B cell (primary cell): ENCODE measurements at regions of chr3 and their contacts with region 1.

Region 1: GRCh38 chr3:157081681-157082210 is 78.2 kb downstream of the CCNL1 start:
- DNase-seq: peak; percentile 86
- ATAC-seq: peak; percentile 99
- H3K4me3 ChIP-seq: no peak overlapping the region
- H3K4me3 Mint-ChIP-seq: peak overlapping the region; percentile 2
- H3K27ac ChIP-seq: no peak overlapping the region
- H3K27ac Mint-ChIP-seq: peak overlapping the region; percentile 63
- H3K4me1 ChIP-seq: peaks cover 9 to 11% of the 10 kb centered on the region in 2 donors
- H3K4me1 Mint-ChIP-seq: peaks cover 11% of the 10 kb centered on the region
- H3K27me3 ChIP-seq: peaks cover 0 to 4% (median 0%) of the 10 kb centered on the region in 4 experiments
- H3K27me3 Mint-ChIP-seq: peaks cover 8% of the 10 kb centered on the region
- CTCF ChIP-seq: peak; percentile 96

Region 2: GRCh38 chr3:155835341-155836071 is 1246.2 kb before region 1 on chr3:
- CTCF ChIA-PET with region 1: no interaction called
- POLR2A ChIA-PET with region 1: no interaction called
- intact Hi-C with region 1: no loop called
- DNase-seq: no peak
- ATAC-seq: no peak
- H3K4me3 ChIP-seq: no peak overlapping the region
- H3K4me3 Mint-ChIP-seq: no peak overlapping the region
- H3K27ac ChIP-seq: no peak overlapping the region
- H3K27ac Mint-ChIP-seq: no peak overlapping the region
- H3K4me1 ChIP-seq: no peaks in the 10 kb centered on the region
- H3K4me1 Mint-ChIP-seq: no peaks in the 10 kb centered on the region
- H3K27me3 ChIP-seq: no peaks in the 10 kb centered on the region
- H3K27me3 Mint-ChIP-seq: no peaks in the 10 kb centered on the region
- CTCF ChIP-seq: no peak

Region 3: DNA sequence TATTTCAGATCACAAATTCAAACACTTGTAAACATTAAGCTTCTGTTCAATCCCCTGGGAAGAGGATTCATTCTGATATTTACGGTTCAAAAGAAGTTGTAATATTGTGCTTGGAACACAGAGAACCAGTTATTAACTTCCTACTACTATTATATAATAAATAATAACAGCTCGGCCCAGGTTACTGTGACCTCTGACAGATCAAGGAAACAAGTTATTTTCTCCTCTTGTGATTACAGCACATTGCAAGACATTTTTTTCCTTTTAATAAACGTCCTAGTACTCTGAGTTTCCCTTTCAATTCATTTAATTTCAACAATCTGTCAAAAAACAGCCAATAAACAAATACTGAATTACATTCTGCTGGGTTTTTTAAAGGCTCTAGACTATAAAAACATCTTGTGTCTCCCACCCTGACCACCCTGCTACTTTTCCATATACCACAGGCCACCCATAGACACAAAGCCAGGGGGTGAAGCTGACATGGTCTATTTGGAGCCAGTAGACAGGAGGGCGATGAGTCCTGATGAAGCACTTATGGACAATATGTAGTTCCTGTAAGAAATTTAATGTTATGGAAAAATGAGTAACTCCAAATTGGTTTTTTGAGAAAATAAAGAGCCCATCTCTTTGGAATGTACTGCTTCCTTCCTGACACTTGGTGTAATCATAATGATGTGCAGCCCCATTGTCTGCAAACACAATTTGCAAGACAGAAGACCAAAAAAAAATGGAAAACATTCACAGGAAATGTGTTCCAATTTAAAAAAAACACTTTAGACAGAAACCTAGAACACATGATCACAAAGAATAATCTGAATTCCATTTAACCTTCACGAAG is 538.8 kb before region 1 on chr3:
- CTCF ChIA-PET with region 1: interaction called, 17 read pairs
- POLR2A ChIA-PET with region 1: no interaction called
- intact Hi-C with region 1: no loop called
- DNase-seq: no peak
- ATAC-seq: no peak
- H3K4me3 ChIP-seq: no peak overlapping the region
- H3K4me3 Mint-ChIP-seq: no peak overlapping the region
- H3K27ac ChIP-seq: no peak overlapping the region
- H3K27ac Mint-ChIP-seq: no peak overlapping the region
- H3K4me1 ChIP-seq: no peaks in the 10 kb centered on the region
- H3K4me1 Mint-ChIP-seq: no peaks in the 10 kb centered on the region
- H3K27me3 ChIP-seq: no peaks in the 10 kb centered on the region
- H3K27me3 Mint-ChIP-seq: no peaks in the 10 kb centered on the region
- CTCF ChIP-seq: no peak

Region 4: GRCh38 chr3:156891665-156892064 is 190.1 kb before region 1 on chr3:
- CTCF ChIA-PET with region 1: interaction called, 4 read pairs
- POLR2A ChIA-PET with region 1: no interaction called
- intact Hi-C with region 1: loop called (anchors 2 kb)
- DNase-seq: peak; percentile 14
- ATAC-seq: no peak
- H3K4me3 ChIP-seq: no peak overlapping the region
- H3K4me3 Mint-ChIP-seq: no peak overlapping the region
- H3K27ac ChIP-seq: no peak overlapping the region
- H3K27ac Mint-ChIP-seq: no peak overlapping the region
- H3K4me1 ChIP-seq: no peaks in the 10 kb centered on the region
- H3K4me1 Mint-ChIP-seq: no peaks in the 10 kb centered on the region
- H3K27me3 ChIP-seq: no peaks in the 10 kb centered on the region
- H3K27me3 Mint-ChIP-seq: no peaks in the 10 kb centered on the region
- CTCF ChIP-seq: no peak

Region 5: DNA sequence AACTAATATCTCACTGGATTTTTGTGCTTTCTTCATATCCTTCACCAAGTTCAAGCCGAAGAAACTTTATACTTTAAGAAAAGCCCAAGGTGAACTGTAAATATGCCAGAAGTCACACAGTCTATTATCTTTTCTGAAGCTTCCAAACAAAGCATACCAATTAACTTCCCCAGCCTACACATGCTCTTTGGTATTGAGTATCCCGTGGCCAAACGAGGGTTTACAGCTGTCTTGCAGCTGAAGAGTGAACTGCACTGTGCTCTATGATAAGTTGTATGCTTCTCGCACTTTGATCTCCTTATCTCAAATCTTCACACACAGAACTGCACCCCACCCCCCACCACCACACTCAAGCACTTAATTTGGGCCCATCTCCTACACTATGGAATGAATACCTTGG is 637.1 kb after region 1 on chr3:
- CTCF ChIA-PET with region 1: no interaction called
- POLR2A ChIA-PET with region 1: no interaction called
- intact Hi-C with region 1: no loop called
- DNase-seq: no peak
- ATAC-seq: no peak
- H3K4me3 ChIP-seq: no peak overlapping the region
- H3K4me3 Mint-ChIP-seq: no peak overlapping the region
- H3K27ac ChIP-seq: no peak overlapping the region
- H3K27ac Mint-ChIP-seq: no peak overlapping the region
- H3K4me1 ChIP-seq: no peaks in the 10 kb centered on the region
- H3K4me1 Mint-ChIP-seq: no peaks in the 10 kb centered on the region
- H3K27me3 ChIP-seq: no peaks in the 10 kb centered on the region
- H3K27me3 Mint-ChIP-seq: no peaks in the 10 kb centered on the region
- CTCF ChIP-seq: no peak